Ascending aorta (tissue), 2 donors: ENCODE measurements at regions of chr6 and their contacts with region 1.

Region 1: GRCh38 chr6:111683749-111684267 is 78.1 kb upstream of the TRAF3IP2 start:
- DNase-seq: peak in 1 of 2 donors; percentile 85
- H3K4me3 ChIP-seq: no peak overlapping the region
- H3K27ac ChIP-seq: peak overlapping the region; percentile 82 to 83
- H3K4me1 ChIP-seq: peaks cover 0 to 27% of the 10 kb centered on the region in 2 donors
- H3K27me3 ChIP-seq: no peaks in the 10 kb centered on the region
- CTCF ChIP-seq: no peak

Region 2: GRCh38 chr6:111322153-111322552 is 361.7 kb before region 1 on chr6:
- intact Hi-C with region 1: no loop called
- DNase-seq: no peak
- H3K4me3 ChIP-seq: no peak overlapping the region
- H3K27ac ChIP-seq: no peak overlapping the region
- H3K4me1 ChIP-seq: no peaks in the 10 kb centered on the region
- H3K27me3 ChIP-seq: no peaks in the 10 kb centered on the region
- CTCF ChIP-seq: no peak

Region 3: GRCh38 chr6:111663692-111664564 is 19.9 kb before region 1 on chr6:
- intact Hi-C with region 1: loop called (anchors 2 kb)
- DNase-seq: peak in 1 of 2 donors; percentile 75
- H3K4me3 ChIP-seq: peak overlapping the region in 1 of 2 donors; percentile 36
- H3K27ac ChIP-seq: peak overlapping the region; percentile 59 to 85
- H3K4me1 ChIP-seq: peaks cover 15 to 45% of the 10 kb centered on the region in 2 donors
- H3K27me3 ChIP-seq: no peaks in the 10 kb centered on the region
- CTCF ChIP-seq: no peak

Region 4: DNA sequence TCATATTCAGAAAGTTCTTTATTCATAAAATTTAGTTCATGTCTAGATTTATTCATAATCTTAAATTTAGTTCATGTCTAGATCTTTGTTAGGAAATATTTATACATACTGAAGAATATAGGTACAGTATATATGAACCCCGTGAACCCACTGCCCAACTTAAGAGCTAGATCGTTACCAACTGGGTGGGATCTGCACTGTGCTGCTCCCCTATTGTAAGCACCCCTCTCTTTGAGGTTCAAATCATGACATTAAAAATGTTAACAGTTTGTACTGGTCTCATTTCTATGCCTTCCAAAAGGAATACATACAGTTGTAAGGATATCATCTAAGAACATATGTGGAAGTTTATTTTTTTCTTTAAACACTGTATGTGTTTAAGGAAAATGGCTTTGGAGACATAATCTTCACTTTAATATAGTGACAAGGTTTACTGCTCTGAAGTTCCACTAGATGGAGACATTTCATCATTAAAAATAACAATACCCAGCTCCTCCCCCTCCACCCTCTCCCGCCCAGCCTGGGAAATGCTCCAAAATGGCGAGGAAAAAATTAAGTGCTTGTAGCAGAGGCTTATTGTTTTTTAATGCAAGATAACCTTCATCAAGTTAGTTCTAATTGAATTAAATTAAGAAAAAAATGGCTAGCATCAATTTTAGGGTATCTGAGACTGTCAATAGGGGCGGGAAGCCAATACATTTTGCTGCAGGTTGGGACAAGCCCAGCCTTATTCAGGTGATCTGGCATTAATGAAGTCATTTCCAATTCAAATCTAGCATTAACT is 26.0 kb after region 1 on chr6:
- intact Hi-C with region 1: no loop called
- DNase-seq: peak in 1 of 2 donors; percentile 78
- H3K4me3 ChIP-seq: peak overlapping the region in 1 of 2 donors; percentile 46
- H3K27ac ChIP-seq: no peak overlapping the region
- H3K4me1 ChIP-seq: peaks cover 0 to 6% of the 10 kb centered on the region in 2 donors
- H3K27me3 ChIP-seq: no peaks in the 10 kb centered on the region
- CTCF ChIP-seq: peak; percentile 58 to 79 (median 77)

Region 5: GRCh38 chr6:112549749-112550148 is 865.9 kb after region 1 on chr6:
- intact Hi-C with region 1: no loop called
- DNase-seq: no peak
- H3K4me3 ChIP-seq: no peak overlapping the region
- H3K27ac ChIP-seq: no peak overlapping the region
- H3K4me1 ChIP-seq: no peaks in the 10 kb centered on the region
- H3K27me3 ChIP-seq: no peaks in the 10 kb centered on the region
- CTCF ChIP-seq: no peak